ENCODE measurements at regions of chr1 and their contacts with region 1.

Region 1: GRCh38 chr1:8878448-8879347 is at the start of gene ENO1:
- DNase-seq: peak; percentile 98 to 100 (median 99)
- H3K4me3 ChIP-seq: peak within 1 kb of the TSS; percentile 73 to 94
- H3K4me3 Mint-ChIP-seq: peak within 1 kb of the TSS; percentile 93 to 97 (median 95)
- H3K27ac ChIP-seq: peak within 1 kb of the TSS; percentile 89
- H3K27ac Mint-ChIP-seq: peak within 1 kb of the TSS; percentile 94 to 99 (median 97)
- H3K4me1 ChIP-seq: peaks cover 48% of the 10 kb centered on the region
- H3K4me1 Mint-ChIP-seq: peaks cover 26 to 61% (median 36%) of the 10 kb centered on the region in 4 donors
- H3K27me3 ChIP-seq: no peaks in the 10 kb centered on the region
- H3K27me3 Mint-ChIP-seq: no peaks in the 10 kb centered on the region
- total RNA-seq, gene ENO1: 291 to 305 TPM

Region 2: GRCh38 chr1:7961216-7962015 is 917.3 kb before region 1 on chr1 and contains the start of gene PARK7:
- CTCF ChIA-PET with region 1: no interaction called
- POLR2A ChIA-PET with region 1: no interaction called
- intact Hi-C with region 1: loop called (anchors 1 kb)
- DNase-seq: peak; percentile 99 to 100 (median 100)
- H3K4me3 ChIP-seq: peak within 1 kb of the TSS; percentile 86 to 97
- H3K4me3 Mint-ChIP-seq: peak within 1 kb of the TSS; percentile 97 to 100 (median 98)
- H3K27ac ChIP-seq: peak within 1 kb of the TSS; percentile 94
- H3K27ac Mint-ChIP-seq: peak within 1 kb of the TSS; percentile 97 to 100 (median 99)
- H3K4me1 ChIP-seq: peaks cover 62% of the 10 kb centered on the region
- H3K4me1 Mint-ChIP-seq: peaks cover 33 to 72% (median 57%) of the 10 kb centered on the region in 4 donors
- H3K27me3 ChIP-seq: no peaks in the 10 kb centered on the region
- H3K27me3 Mint-ChIP-seq: no peaks in the 10 kb centered on the region
- total RNA-seq, gene PARK7: 112 to 122 TPM

Region 3: GRCh38 chr1:8817406-8818324 is 61.0 kb before region 1 on chr1 and contains the start of gene RERE:
- CTCF ChIA-PET with region 1: no interaction called
- POLR2A ChIA-PET with region 1: interaction called, 18 read pairs
- intact Hi-C with region 1: loop called (anchors 2 kb)
- DNase-seq: peak; percentile 93 to 100 (median 98)
- H3K4me3 ChIP-seq: peak within 1 kb of the TSS; percentile 79 to 80
- H3K4me3 Mint-ChIP-seq: peak within 1 kb of the TSS; percentile 86 to 97 (median 94)
- H3K27ac ChIP-seq: peak within 1 kb of the TSS; percentile 81
- H3K27ac Mint-ChIP-seq: peak within 1 kb of the TSS; percentile 91 to 99 (median 98)
- H3K4me1 ChIP-seq: peaks cover 28% of the 10 kb centered on the region
- H3K4me1 Mint-ChIP-seq: peaks cover 24 to 40% (median 29%) of the 10 kb centered on the region in 4 donors
- H3K27me3 ChIP-seq: no peaks in the 10 kb centered on the region
- H3K27me3 Mint-ChIP-seq: peaks cover 2 to 3% of the 10 kb centered on the region in 2 donors
- total RNA-seq, gene RERE: 104 to 117 TPM

Region 4: DNA sequence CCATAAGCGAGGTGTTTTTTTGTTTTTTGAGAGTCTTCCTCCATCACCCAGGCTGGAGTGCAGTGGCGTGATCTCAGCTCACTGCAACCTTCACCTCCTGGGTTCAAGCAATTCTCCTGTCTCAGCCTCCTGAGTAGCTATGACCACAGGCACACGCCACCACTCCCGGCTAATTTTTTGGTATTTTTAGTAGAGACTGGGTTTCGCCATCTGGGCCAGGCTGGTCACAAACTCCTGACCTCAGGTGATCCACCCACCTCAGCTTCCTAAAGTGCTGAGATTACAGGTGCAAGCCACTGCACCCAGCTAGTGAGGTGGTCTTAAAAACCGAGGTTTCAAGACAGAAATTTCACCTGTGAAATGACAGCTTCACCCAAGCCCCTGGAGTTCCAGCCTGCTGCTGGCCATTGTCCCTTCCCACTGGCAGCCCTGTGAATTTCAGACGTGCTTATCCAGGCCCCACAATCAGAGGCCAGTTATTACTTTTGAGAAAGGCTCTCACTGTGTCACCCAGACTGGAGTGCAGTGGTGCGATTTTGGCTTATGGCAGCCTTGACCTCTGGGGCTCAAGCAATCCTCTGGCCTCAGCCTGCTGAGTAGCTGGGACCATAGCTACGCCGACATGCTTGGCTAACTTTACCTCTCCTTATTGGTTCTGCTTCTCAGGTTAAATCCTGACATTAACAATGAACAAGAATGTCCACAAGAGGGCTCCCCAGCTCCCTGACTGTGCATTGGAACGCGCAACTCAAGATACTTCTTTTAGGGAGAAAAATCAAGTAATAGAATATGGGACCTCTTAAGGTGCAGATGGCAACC is 19.6 kb before region 1 on chr1:
- CTCF ChIA-PET with region 1: interaction called, 118 read pairs
- POLR2A ChIA-PET with region 1: interaction called, 47 read pairs
- intact Hi-C with region 1: loop called (anchors 1 kb)
- DNase-seq: peak; percentile 50 to 58 (median 55)
- H3K4me3 ChIP-seq: no peak overlapping the region
- H3K4me3 Mint-ChIP-seq: peak overlapping the region in 5 of 8 donors; percentile 2 to 43 (median 6)
- H3K27ac ChIP-seq: no peak overlapping the region
- H3K27ac Mint-ChIP-seq: peak overlapping the region; percentile 64 to 91 (median 76)
- H3K4me1 ChIP-seq: peaks cover 10% of the 10 kb centered on the region
- H3K4me1 Mint-ChIP-seq: peaks cover 10 to 32% (median 20%) of the 10 kb centered on the region in 4 donors
- H3K27me3 ChIP-seq: no peaks in the 10 kb centered on the region
- H3K27me3 Mint-ChIP-seq: no peaks in the 10 kb centered on the region

Region 5: DNA sequence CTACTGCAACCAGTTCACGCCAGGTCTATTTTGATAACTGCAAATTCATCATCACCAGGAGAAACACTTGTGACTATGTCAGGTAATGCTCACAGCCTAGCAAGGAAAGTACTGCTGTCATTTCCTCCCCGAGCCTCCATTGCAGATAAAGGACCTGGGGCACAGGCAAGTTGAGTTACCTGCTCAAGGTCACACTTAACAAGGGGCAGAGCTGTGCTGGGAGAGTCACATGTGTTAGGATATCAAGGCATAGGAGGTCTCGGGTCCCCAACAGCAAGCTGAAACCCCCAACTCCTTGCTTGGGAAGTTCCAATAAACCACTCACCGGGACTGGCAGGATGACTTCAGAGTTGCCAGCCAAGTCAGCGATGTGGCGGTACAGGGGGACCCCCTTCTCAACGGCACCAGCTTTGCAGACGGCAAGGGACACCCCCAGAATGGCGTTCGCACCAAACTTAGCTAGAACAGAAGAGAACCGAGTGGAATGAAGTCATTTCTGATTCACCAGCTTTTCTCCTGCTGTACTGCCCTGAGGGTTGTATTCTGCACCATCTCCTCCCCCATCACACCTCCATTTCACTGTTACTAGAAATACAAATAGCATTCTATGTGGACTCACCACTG is 11.8 kb before region 1 on chr1:
- CTCF ChIA-PET with region 1: interaction called, 118 read pairs
- POLR2A ChIA-PET with region 1: interaction called, 27 read pairs
- intact Hi-C with region 1: loop called (anchors 1 kb)
- DNase-seq: no peak
- H3K4me3 ChIP-seq: no peak overlapping the region
- H3K4me3 Mint-ChIP-seq: no peak overlapping the region
- H3K27ac ChIP-seq: no peak overlapping the region
- H3K27ac Mint-ChIP-seq: peak overlapping the region in 2 of 7 donors; percentile 72 to 73
- H3K4me1 ChIP-seq: peaks cover 2% of the 10 kb centered on the region
- H3K4me1 Mint-ChIP-seq: peaks cover 10 to 31% (median 17%) of the 10 kb centered on the region in 4 donors
- H3K27me3 ChIP-seq: no peaks in the 10 kb centered on the region
- H3K27me3 Mint-ChIP-seq: no peaks in the 10 kb centered on the region

Region 6: DNA sequence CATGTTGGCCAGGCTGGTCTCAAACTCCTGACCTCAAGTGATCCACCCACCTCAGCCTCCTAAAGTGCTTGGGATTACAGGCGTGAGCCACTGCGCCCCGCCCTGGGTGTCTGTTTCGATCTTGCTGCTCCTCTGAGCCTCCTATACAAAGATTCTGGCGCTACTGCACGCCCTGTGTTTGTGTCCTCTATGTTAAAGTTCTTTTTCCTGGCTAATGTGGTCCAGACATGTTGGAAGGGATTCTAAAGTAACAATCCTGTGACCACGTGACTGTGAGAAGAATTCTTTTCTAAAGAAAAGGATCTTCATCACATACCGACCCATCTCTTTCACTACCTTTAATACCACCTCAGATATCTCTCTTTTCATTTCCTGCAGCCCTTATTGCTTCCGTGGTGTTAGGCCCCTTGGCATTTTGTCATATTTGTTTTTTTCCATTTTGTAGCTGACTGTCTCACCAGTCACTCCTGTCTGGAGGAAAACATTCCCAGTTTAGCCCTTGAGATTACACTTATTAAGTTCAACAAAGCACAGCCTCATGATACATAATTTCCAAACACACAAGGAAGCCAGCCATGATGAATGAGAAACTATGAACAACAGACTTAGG is 27.0 kb after region 1 on chr1:
- CTCF ChIA-PET with region 1: no interaction called
- POLR2A ChIA-PET with region 1: no interaction called
- intact Hi-C with region 1: no loop called
- DNase-seq: no peak
- H3K4me3 ChIP-seq: no peak overlapping the region
- H3K4me3 Mint-ChIP-seq: no peak overlapping the region
- H3K27ac ChIP-seq: no peak overlapping the region
- H3K27ac Mint-ChIP-seq: peak overlapping the region in 4 of 7 donors; percentile 6 to 73 (median 46)
- H3K4me1 ChIP-seq: peaks cover 2% of the 10 kb centered on the region
- H3K4me1 Mint-ChIP-seq: peaks cover 0 to 8% (median 4%) of the 10 kb centered on the region in 4 donors
- H3K27me3 ChIP-seq: no peaks in the 10 kb centered on the region
- H3K27me3 Mint-ChIP-seq: peaks cover 0 to 4% of the 10 kb centered on the region in 2 donors

Region 7: DNA sequence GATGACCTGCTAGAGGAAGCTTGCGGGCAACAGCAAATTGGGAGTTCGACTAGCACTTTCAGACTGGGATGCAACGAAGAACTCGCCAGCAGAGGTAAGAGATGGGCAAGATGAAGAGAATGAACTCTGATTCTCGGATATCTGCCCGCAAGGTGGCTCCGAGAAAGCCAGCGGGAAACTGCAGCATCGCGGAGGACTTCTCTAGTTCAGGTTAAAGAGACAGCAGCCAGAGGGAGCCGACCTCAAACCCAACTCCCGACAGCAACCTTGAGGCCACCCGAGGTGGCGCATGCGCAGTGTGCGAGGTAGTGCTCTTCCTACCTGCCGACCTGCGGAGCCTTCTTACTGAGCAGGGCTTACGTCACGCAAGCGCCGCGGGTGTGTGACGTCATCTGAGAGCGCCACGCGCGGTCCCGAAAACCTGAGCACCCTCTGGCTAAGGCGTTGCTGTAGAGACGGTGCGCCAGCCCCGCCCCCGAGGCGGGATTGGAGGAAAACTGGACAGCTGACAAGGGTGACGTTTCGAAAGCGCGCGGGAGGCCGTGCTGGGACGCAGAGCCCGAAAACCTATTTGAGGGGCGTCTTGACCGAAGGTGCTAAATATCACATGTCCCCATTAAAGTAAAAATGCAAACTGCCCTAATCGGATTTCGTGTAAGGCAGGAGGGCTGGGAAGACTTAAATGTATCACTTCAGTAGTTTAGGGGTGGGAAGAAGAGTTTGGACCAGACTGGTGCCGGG is 550.1 kb after region 1 on chr1:
- CTCF ChIA-PET with region 1: no interaction called
- POLR2A ChIA-PET with region 1: interaction called, 3 read pairs
- intact Hi-C with region 1: loop called (anchors 5 kb)
- DNase-seq: peak; percentile 99
- H3K4me3 ChIP-seq: peak overlapping the region; percentile 53 to 58
- H3K4me3 Mint-ChIP-seq: peak overlapping the region; percentile 91 to 99 (median 96)
- H3K27ac ChIP-seq: peak overlapping the region; percentile 71
- H3K27ac Mint-ChIP-seq: peak overlapping the region; percentile 98 to 100 (median 99)
- H3K4me1 ChIP-seq: peaks cover 47% of the 10 kb centered on the region
- H3K4me1 Mint-ChIP-seq: peaks cover 38 to 58% (median 49%) of the 10 kb centered on the region in 4 donors
- H3K27me3 ChIP-seq: no peaks in the 10 kb centered on the region
- H3K27me3 Mint-ChIP-seq: peaks cover 0 to 5% of the 10 kb centered on the region in 2 donors

Measured in CD4-positive, alpha-beta memory T cell (primary cell).